Endothelial cell of umbilical vein (primary cell): ENCODE measurements at regions of chrX and their contacts with region 1.

Region 1: DNA sequence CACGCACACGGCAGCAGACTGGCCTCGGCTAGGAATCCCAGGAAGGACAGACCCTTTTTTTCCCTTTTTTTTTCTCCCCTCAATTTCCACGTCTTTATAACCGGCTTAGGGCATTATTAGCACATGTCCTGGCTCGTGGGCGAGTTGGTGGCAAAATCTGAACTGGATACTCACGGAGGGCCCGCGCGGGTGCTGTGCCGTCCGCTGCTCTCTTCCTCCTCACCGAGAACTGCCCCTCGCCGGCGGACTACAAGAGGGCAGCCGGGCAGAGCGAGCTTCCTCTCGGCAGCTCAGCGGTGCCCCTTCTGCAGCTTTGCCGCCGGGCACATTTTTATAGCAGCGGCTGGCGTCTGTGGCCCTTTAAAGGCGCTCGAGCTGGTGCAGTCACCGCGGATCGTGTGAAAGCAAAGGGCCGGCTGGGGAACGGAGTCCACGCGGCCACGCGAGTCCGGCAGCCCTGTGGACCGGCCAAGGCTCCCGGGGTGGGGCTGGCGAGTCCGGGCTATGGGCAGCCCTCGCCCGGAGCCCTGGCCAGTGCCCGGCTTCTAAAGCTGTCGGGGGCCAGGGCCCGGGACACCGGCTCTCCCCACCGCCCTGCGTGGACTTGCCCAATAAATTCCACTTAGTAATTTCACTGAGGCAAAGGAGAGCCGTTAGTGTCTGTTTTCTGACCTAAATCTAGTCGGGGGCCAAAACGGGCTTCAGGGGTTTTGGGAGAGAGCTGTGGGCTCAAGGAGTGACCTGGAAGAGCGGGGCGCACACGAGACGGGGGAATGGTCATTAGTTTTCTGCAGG is 1.3 kb upstream of the CITED1 start:
- DNase-seq: peak; percentile 64
- H3K4me3 ChIP-seq: peak overlapping the region; percentile 20 to 43 (median 37)
- H3K27ac ChIP-seq: no peak overlapping the region
- H3K4me1 ChIP-seq: peaks cover 22% of the 10 kb centered on the region
- H3K27me3 ChIP-seq: peaks cover 44 to 62% of the 10 kb centered on the region in 2 experiments
- CTCF ChIP-seq: no peak
- POLR2A ChIP-seq: no peak

Region 2: DNA sequence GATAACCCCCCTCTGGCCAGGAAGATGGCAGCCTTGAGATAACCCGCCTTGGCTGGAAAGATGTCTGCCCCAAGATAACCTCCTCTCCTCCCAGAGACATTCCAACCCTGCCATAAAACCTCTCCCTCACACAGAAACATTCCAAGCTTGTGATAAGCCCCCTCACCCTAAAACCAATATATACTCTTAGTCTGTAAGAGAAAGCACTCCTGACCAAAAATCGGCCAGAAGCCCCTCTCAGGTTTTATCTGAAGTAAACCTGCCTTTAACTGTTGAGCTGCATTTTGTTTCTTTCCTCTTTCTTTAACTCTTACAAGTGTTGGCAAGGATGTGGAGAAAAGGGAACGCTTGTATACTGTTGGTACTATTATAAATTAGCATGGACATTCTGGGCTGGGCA is 76.8 kb before region 1 on chrX:
- CTCF ChIA-PET with region 1: no interaction called
- POLR2A ChIA-PET with region 1: no interaction called
- dilution Hi-C with region 1: no loop called
- intact Hi-C with region 1: no loop called
- DNase-seq: no peak
- H3K4me3 ChIP-seq: no peak overlapping the region
- H3K27ac ChIP-seq: no peak overlapping the region
- H3K4me1 ChIP-seq: no peaks in the 10 kb centered on the region
- H3K27me3 ChIP-seq: no peaks in the 10 kb centered on the region
- CTCF ChIP-seq: no peak
- POLR2A ChIP-seq: no peak

Region 3: GRCh38 chrX:72258174-72258573 is 48.9 kb before region 1 on chrX:
- CTCF ChIA-PET with region 1: no interaction called
- POLR2A ChIA-PET with region 1: no interaction called
- dilution Hi-C with region 1: no loop called
- intact Hi-C with region 1: no loop called
- DNase-seq: no peak
- H3K4me3 ChIP-seq: no peak overlapping the region
- H3K27ac ChIP-seq: no peak overlapping the region
- H3K4me1 ChIP-seq: peaks cover 6% of the 10 kb centered on the region
- H3K27me3 ChIP-seq: peaks cover 0 to 4% of the 10 kb centered on the region in 2 experiments
- CTCF ChIP-seq: no peak
- POLR2A ChIP-seq: no peak

Region 4: DNA sequence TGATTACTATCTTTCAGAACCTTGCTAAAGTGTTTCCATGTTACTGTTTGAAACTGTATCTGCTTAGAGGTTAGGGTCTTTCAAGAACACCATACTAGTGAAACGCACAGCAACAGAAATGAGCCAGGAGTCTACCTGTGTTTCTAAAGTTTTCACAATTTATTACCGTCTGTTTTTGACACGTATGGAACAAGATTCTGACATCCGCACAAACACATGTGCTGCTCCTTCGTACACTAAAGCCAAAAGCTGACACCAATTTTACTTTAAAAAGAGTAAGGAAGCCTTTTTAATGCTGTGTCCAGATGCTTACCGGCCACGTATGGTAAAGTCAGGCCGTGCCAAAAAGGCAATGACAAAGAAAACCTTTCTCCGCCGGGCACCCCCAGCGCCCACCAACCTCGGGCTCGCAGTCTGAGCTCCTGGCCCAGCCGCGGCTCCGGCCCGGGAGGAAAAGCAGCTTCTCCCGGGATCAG is 30.5 kb before region 1 on chrX:
- CTCF ChIA-PET with region 1: interaction called, 8 read pairs
- POLR2A ChIA-PET with region 1: interaction called, 5 read pairs
- dilution Hi-C with region 1: no loop called
- intact Hi-C with region 1: loop called (anchors 2 kb)
- DNase-seq: peak; percentile 22
- H3K4me3 ChIP-seq: peak overlapping the region; percentile 56 to 97 (median 82)
- H3K27ac ChIP-seq: peak overlapping the region; percentile 60
- H3K4me1 ChIP-seq: peaks cover 39% of the 10 kb centered on the region
- H3K27me3 ChIP-seq: peaks cover 0 to 2% of the 10 kb centered on the region in 2 experiments
- CTCF ChIP-seq: no peak
- POLR2A ChIP-seq: no peak